ENCODE measurements at regions of chr2 and their contacts with region 1.

Region 1: DNA sequence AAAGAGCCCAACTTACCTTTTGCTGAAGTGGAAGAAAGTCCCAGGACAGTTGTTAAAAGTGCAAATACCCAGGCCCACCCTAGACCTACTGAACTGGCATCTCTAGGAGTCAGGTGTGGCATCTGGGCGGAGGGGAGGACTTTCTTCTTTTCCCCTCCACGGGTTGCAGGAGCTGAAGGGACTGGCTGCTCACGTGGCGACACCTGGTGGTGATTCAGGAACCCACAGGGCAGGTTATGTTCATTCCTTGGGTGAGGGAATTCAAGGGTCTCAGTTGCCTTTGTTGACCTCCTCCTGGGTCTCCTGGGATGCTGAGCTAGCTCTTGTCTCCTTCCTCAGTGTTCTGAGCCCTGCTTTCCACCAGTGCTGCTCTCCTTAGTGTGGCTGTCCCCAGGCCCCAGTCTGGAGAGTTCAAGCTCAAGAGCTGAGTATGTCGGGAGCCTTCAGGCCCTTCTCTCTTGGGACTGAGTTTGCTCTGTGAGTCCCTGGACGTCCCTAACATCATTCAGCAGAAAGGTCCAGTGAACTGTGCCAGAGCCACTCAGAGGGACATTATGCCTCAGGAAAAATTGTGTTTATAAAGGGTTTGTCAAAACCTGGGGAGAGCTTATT is 56.9 kb downstream of the DYSF start:
- DNase-seq: peak; percentile 67

Region 2: DNA sequence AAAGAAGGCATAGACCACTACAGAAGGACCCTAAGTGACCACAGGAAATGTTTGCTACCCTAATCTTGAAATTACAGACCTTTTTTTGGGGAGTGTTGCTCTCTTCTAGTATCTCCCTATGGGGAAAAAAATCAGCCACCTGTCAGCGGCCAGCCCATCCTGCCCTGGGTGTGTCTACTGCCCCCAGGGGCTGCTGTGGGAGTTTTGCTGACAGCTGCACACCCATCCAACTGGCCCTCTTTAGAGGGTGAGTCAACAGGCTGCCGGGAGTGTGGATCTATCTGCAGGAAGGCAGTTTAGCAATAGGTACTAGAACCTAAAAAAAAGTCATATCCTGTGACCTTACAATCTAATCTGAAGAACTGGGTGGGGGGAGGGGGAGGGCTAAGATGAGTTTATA is 57.7 kb before region 1 on chr2:
- in situ Hi-C with region 1: loop called (anchors 10 kb)
- DNase-seq: peak; percentile 65